ENCODE measurements at regions of chr2 and their contacts with region 1.

Region 1: GRCh38 chr2:27200321-27200720 is 11.5 kb upstream of the ATRAID start:
- DNase-seq: peak in 1 of 4 experiments; percentile 15
- ATAC-seq: no peak
- H3K4me3 ChIP-seq: no peak overlapping the region
- H3K27ac ChIP-seq: no peak overlapping the region
- H3K4me1 ChIP-seq: no peaks in the 10 kb centered on the region
- H3K27me3 ChIP-seq: no peaks in the 10 kb centered on the region
- CTCF ChIP-seq: no peak
- EP300 ChIP-seq: no peak
- POLR2A ChIP-seq: no peak
- RAD21 ChIP-seq: no peak

Region 2: GRCh38 chr2:25982273-25982967 is 1217.9 kb before region 1 on chr2 and contains the start of gene KIF3C:
- CTCF ChIA-PET with region 1: no interaction called
- POLR2A ChIA-PET with region 1: no interaction called
- in situ Hi-C with region 1: no loop called
- intact Hi-C with region 1: no loop called
- DNase-seq: peak; percentile 83 to 89 (median 86)
- ATAC-seq: peak; percentile 97
- H3K4me3 ChIP-seq: peak within 1 kb of the TSS; percentile 64
- H3K27ac ChIP-seq: peak within 1 kb of the TSS; percentile 51
- H3K4me1 ChIP-seq: peaks cover 6 to 33% of the 10 kb centered on the region in 2 experiments; a peak in 3 of 5 replicates
- H3K27me3 ChIP-seq: no peaks in the 10 kb centered on the region
- CTCF ChIP-seq: no peak
- EP300 ChIP-seq: no peak
- POLR2A ChIP-seq: peak; percentile 63
- RAD21 ChIP-seq: no peak
- polyA plus RNA-seq, gene KIF3C: 0.69 to 0.88 TPM

Region 3: GRCh38 chr2:27211829-27212627 is 11.7 kb after region 1 on chr2 and contains the starts of genes ATRAID and SLC5A6:
- CTCF ChIA-PET with region 1: no interaction called
- POLR2A ChIA-PET with region 1: interaction called, 12 read pairs
- in situ Hi-C with region 1: no loop called
- intact Hi-C with region 1: no loop called
- DNase-seq: peak; percentile 91 to 96 (median 96)
- ATAC-seq: peak; percentile 95
- H3K4me3 ChIP-seq: peak within 1 kb of the TSS; percentile 76
- H3K27ac ChIP-seq: peak within 1 kb of the TSS; percentile 92
- H3K4me1 ChIP-seq: peaks cover 22 to 34% of the 10 kb centered on the region in 2 experiments
- H3K27me3 ChIP-seq: no peaks in the 10 kb centered on the region
- CTCF ChIP-seq: no peak
- EP300 ChIP-seq: no peak
- POLR2A ChIP-seq: peak; percentile 95
- RAD21 ChIP-seq: no peak
- polyA plus RNA-seq, gene ATRAID: 122 to 187 TPM
- polyA plus RNA-seq, gene SLC5A6: 32.6 to 92.7 TPM